ENCODE measurements at regions of chr12 and their contacts with region 1.

Region 1: DNA sequence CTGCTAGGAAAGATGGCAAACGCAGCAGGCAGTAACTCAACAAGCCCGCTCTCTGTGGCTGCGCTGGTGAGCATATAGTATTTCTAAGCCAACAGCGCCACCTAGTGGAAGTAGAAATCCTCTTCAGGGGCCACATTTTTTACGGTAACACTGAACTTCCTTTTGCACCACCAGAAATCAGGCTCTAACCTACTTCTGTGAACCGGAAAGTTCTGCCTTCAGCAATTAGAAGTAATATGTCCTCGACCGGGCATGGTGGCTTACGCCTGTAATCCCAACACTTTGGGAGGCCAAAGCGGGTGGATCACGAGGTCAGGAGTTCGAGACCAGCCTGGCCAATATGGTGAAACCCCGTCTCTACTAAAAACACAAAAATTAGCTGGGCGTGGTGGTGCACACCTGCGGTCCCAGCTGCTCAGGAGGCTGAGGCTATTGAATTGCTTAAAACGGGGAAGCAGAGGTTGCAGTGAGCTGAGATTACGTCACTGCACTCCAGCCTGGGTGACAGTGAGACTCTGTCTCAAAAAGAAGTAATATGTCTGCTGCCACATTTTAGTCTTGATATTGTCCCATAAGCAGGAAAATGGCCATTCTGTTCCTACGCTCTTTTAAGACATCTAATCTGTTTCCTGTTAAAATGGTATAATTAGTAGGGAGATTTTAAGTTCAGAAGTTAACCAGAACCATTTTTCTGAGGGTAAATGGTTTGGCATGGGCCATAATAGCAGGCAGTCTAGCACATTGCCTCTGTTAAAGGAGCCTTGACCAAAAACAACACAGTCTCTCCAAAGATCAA is 26.8 kb downstream of the APOBEC1 start:
- DNase-seq: peak; percentile 83
- H3K4me3 ChIP-seq: no peak overlapping the region
- H3K27ac ChIP-seq: no peak overlapping the region
- H3K4me1 ChIP-seq: no peaks in the 10 kb centered on the region
- H3K27me3 ChIP-seq: no peaks in the 10 kb centered on the region
- CTCF ChIP-seq: peak; percentile 84 to 96 (median 90)
- POLR2A ChIP-seq: no peak

Region 2: GRCh38 chr12:7219599-7220243 is 419.2 kb before region 1 on chr12:
- intact Hi-C with region 1: loop called (anchors 1 kb)
- DNase-seq: peak; percentile 71
- H3K4me3 ChIP-seq: no peak overlapping the region
- H3K27ac ChIP-seq: no peak overlapping the region
- H3K4me1 ChIP-seq: no peaks in the 10 kb centered on the region
- H3K27me3 ChIP-seq: no peaks in the 10 kb centered on the region
- CTCF ChIP-seq: peak; percentile 62 to 90 (median 82)
- POLR2A ChIP-seq: no peak